A549 (cell line): ENCODE measurements at regions of chr12 and their contacts with region 1.

Region 1: GRCh38 chr12:3299929-3300832 is 190.8 kb upstream of the PRMT8 start:
- DNase-seq: peak; percentile 74 to 91
- ATAC-seq: peak; percentile 82 to 89
- H3K4me3 ChIP-seq: peak overlapping the region; percentile 20; the same call in 1 of the 3 replicates
- H3K27ac ChIP-seq: peak overlapping the region; percentile 41 to 76; a peak in 5 of 6 replicates
- H3K4me1 ChIP-seq: peaks cover 11% of the 10 kb centered on the region; the same call in 2 of the 3 replicates
- CTCF ChIP-seq: peak; percentile 74
- EP300 ChIP-seq: no peak
- POLR2A ChIP-seq: no peak
- RAD21 ChIP-seq: peak; percentile 76 to 86

Region 2: DNA sequence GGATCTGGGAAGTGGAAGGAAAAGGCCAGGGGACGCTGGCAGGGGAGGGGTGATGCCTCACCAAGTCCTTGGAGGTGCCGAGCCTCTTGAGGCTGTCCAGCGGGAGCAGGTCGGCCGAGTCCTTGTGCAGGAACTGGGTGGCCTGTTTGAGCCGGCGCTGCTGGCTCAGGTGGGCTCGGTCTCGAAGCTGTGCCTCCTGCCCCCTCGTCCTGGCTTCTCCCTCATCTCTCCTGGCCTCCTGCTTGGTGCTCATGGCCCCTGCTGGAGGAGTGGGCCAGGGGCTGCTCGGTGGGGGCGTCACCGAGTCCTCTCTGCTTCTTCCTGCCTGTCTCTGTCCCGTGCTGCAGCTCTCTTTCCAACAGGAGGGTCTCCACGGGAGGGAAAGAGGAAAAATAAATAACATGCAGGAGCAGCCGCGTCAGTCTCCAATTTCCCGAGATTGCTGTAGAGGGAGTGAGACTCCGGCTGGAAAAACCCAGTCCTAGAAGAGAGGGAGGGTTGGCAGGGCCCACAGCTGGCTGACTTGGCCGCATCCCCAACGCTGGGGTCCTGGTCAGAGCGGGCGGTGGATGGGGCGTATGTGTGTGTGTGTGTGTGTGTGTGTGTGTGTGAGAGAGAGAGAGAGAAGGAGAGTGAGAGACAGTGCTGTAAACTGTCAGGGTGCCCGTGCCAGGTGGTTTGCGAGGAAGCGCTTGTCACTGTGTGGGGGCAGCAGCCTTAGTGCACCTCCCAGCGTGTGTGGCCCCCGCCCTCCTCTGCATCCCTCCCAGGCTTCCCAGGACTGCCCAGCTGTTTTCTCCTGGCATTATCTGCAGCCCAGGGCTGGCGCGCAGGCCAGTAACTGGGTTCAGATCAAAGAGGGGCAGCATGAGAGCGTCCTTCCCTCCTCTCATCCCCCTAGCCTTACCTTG is 465.3 kb before region 1 on chr12 and contains the start of gene NRIP2:
- CTCF ChIA-PET with region 1: no interaction called
- POLR2A ChIA-PET with region 1: no interaction called
- DNase-seq: no peak
- ATAC-seq: no peak; a peak in 2 of 6 replicates
- H3K4me3 ChIP-seq: no peak within 1 kb of the TSS
- H3K27ac ChIP-seq: no peak within 1 kb of the TSS
- H3K4me1 ChIP-seq: no peaks in the 10 kb centered on the region
- CTCF ChIP-seq: no peak
- EP300 ChIP-seq: no peak
- POLR2A ChIP-seq: no peak
- RAD21 ChIP-seq: no peak
- polyA plus RNA-seq, gene NRIP2: not detected in 2 replicates

Region 3: DNA sequence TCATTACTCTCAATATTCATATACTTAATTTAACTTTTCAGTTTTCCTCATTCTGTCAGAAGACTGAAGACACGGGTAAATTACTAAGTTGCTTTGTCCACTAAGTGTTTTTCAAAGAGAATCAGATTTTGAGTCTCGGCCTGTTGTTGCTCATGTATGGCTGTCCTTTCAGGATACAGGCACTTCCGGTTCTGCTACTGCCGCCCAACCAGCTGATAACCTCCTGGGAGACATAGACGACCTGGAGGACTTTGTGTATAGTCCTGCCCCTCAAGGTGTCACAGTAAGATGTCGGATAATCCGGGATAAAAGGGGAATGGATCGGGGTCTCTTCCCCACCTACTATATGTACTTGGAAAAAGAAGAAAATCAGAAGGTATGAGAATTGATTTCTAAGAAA is 369.3 kb before region 1 on chr12:
- CTCF ChIA-PET with region 1: no interaction called
- POLR2A ChIA-PET with region 1: no interaction called
- DNase-seq: no peak
- ATAC-seq: no peak
- H3K4me3 ChIP-seq: no peak overlapping the region
- H3K27ac ChIP-seq: no peak overlapping the region
- H3K4me1 ChIP-seq: no peaks in the 10 kb centered on the region
- CTCF ChIP-seq: no peak
- EP300 ChIP-seq: no peak
- POLR2A ChIP-seq: no peak
- RAD21 ChIP-seq: no peak

Region 4: DNA sequence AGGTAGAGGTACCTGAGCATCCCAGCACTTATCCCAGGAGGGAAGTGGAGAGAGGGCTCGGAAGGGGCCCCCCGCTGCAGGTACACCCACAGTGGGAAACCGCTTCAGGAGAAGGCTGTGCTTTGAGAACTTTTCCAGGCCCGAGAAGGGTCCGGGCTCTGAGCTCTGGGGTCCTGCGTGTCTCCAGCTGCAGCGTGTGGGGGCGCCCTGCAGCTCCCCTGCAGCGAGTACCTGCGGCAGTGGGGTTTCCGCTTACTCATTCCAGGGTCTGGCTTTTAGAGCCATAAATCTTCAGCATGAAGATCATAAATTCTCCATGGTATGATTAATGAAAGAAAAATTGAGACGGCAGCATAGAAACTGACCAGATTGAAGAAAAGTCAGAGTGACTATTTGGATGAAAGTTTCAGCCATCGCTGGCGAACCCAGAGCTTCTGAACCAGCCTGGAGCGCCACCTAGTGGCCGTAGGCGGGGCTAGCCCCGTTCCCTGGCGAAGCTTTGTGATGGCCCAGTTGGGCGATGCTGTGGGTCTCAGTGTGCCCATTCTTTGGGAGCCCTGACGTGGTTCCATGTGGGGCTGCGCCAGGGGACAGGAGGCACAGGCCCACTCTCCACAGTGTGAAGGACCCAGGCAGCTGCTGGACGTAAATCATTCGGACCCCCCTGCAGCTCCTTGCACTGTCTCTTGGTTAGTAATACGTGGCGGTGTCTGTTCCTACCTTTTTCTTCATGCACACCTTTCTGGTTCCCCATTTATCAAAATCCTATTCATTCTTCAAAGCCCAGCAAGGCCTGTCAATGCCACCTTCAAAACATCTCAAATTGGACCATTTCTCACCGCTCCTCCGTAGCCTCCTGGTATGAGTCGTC is 24.8 kb before region 1 on chr12:
- CTCF ChIA-PET with region 1: interaction called, 47 read pairs
- POLR2A ChIA-PET with region 1: no interaction called
- DNase-seq: peak; percentile 62 to 69
- ATAC-seq: peak; percentile 75 to 92
- H3K4me3 ChIP-seq: no peak overlapping the region
- H3K27ac ChIP-seq: no peak overlapping the region
- H3K4me1 ChIP-seq: peaks cover 10% of the 10 kb centered on the region
- CTCF ChIP-seq: peak; percentile 94
- EP300 ChIP-seq: no peak
- POLR2A ChIP-seq: no peak
- RAD21 ChIP-seq: peak; percentile 92

Region 5: GRCh38 chr12:3329361-3329760 is 29.2 kb after region 1 on chr12:
- CTCF ChIA-PET with region 1: interaction called, 22 read pairs
- POLR2A ChIA-PET with region 1: no interaction called
- DNase-seq: no peak
- ATAC-seq: no peak
- H3K4me3 ChIP-seq: no peak overlapping the region
- H3K27ac ChIP-seq: no peak overlapping the region
- H3K4me1 ChIP-seq: no peaks in the 10 kb centered on the region
- CTCF ChIP-seq: no peak
- EP300 ChIP-seq: no peak
- POLR2A ChIP-seq: no peak
- RAD21 ChIP-seq: no peak

Region 6: DNA sequence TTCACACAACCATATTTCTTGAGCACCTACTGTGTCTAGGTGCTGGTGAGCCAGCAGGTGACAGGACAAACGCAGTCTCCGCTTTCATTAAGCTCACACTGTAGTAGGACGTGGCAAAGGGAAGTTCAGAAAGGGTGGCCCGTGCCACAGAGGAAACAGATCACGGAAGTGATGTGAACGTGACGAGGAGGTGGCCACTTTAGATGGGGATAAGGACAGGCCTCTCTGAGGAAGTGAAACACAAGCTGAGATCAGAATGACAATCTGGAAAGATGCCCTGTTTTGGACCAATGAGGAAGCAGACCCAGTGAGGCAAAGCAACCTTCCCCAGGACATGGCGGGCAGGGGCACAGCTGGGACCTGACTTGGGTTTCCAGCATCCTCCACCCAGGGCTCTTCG is 63.4 kb after region 1 on chr12:
- CTCF ChIA-PET with region 1: interaction called, 11 read pairs
- POLR2A ChIA-PET with region 1: no interaction called
- DNase-seq: no peak
- ATAC-seq: no peak
- H3K4me3 ChIP-seq: no peak overlapping the region
- H3K27ac ChIP-seq: no peak overlapping the region
- H3K4me1 ChIP-seq: no peaks in the 10 kb centered on the region
- CTCF ChIP-seq: no peak
- EP300 ChIP-seq: no peak
- POLR2A ChIP-seq: no peak
- RAD21 ChIP-seq: no peak

Region 7: DNA sequence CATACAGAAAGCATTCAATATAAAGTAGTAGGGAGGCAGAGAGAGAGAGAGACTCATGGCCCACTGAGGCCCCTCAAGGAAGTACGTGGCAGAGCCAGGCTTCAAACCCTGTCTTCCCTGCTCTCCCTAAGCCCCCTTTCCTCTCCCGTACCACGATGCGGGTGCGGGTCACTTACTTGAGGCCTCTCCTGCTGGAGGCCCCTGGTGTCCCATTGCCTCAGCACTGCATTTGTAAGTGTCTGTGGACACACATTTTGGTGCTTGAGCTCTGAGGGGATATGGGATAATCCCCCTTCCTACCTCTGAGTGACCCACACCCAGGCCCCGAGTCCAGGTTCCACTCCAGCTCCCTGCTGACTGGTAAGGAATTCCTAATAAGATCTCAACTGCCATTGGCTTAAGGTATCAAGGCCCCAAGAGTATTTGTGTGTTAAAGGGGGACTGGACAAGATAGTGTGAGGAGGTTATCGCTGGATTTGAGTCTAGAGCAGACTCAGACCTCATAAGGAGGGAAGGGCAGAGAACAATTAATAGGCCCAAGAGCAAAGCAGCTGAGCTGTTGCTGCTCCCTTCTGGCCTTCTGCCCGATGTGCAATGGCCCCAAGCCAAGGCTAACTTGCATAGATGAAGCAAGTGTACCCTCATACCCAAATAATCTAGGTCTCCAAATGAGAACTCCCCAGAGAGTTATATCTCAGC is 380.9 kb after region 1 on chr12:
- CTCF ChIA-PET with region 1: interaction called, 20 read pairs
- POLR2A ChIA-PET with region 1: no interaction called
- DNase-seq: no peak
- ATAC-seq: no peak
- H3K4me3 ChIP-seq: no peak overlapping the region
- H3K27ac ChIP-seq: no peak overlapping the region
- H3K4me1 ChIP-seq: no peaks in the 10 kb centered on the region
- CTCF ChIP-seq: no peak
- EP300 ChIP-seq: no peak
- POLR2A ChIP-seq: no peak
- RAD21 ChIP-seq: no peak

Region 8: DNA sequence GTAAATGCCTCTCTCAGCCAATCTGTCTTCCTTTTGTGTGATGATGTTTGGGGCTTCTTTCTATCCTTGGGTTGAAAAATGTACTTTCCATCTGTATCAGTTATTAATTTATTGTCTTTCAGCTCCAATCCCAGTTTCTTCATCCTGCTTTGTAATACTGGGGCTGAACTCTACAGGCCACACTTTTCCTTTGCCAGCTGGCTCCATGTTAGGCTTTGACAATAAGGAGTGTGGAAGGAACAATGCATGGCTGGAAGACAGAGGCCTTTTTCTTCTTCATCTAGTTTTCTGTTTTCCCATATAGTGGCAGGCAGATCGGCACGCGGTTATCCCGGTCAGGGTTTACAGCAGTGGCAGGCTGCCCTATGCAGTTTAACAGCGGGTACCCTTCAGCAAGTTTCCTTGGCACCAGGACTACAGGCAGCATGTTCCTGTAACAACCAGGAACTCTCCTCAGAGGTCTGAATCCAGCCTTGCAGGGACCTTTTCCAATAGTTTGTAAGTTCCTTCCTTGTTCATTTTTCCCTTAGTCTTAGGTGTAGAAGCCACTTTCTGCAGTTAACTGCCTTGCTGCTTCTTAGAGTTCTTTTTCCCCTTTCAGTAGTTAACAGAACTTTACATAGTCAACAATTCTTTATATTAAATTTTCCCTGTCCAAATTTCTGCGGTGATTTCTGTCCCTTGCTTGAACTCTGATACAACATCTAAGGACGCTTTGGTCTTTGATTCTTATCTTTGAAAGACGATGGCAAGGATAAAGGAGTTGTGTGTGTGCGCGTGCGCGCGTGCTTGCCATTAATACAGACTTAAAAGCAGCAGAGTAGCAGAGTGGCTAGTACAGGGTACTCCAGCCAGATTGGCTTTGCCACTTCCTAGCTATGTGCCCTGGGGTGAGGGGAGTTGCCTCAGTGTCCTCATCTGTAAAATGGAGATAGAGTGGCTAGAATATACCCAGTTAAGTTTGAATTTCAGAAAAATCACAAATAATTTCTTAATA is 491.4 kb after region 1 on chr12:
- CTCF ChIA-PET with region 1: interaction called, 117 read pairs
- POLR2A ChIA-PET with region 1: no interaction called
- DNase-seq: no peak
- ATAC-seq: no peak
- H3K4me3 ChIP-seq: no peak overlapping the region
- H3K27ac ChIP-seq: no peak overlapping the region
- H3K4me1 ChIP-seq: no peaks in the 10 kb centered on the region
- CTCF ChIP-seq: no peak
- EP300 ChIP-seq: no peak
- POLR2A ChIP-seq: no peak
- RAD21 ChIP-seq: no peak

Region 9: GRCh38 chr12:4037747-4038312 is 737.6 kb after region 1 on chr12:
- CTCF ChIA-PET with region 1: interaction called, 16 read pairs
- POLR2A ChIA-PET with region 1: no interaction called
- DNase-seq: peak; percentile 29 to 42
- ATAC-seq: peak; percentile 51 to 75; a peak in 3 of 6 replicates
- H3K4me3 ChIP-seq: no peak overlapping the region
- H3K27ac ChIP-seq: no peak overlapping the region
- H3K4me1 ChIP-seq: peaks cover 11% of the 10 kb centered on the region; the same call in 2 of the 3 replicates
- CTCF ChIP-seq: peak; percentile 80
- EP300 ChIP-seq: no peak
- POLR2A ChIP-seq: no peak
- RAD21 ChIP-seq: peak; percentile 79 to 81